Psoas muscle (tissue), 8 donors: ENCODE measurements at regions of chr7 and their contacts with region 1.

Region 1: DNA sequence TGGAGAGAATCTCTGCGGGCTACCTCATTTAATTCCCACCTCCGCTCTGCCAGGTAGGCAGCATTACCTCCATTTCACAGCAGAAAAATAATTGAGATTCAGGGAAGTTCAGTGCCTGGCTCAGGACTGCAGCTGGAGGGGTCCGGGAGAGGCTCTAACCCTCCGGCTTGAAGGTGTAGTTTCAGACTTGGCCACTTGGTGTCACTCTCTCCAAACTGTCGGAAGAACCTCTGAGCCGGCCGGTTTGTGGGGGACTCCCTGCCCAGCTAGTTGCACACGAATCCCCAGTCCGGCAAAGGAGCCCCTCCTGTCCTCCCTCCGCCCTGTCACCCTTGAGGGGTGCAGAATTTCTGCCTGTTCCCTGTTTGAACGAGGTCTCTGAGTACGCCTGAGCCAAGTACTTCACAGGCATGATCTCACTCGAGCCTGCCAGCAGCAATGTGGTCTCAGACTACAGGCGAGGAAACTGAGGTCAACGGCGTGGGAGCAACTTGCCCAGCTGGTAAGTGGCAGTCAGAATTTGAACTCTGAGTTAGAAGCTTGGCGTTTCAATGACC is 144.7 kb upstream of the ZNF716 start:
- DNase-seq: no peak
- ATAC-seq: peak in 3 of 4 donors; percentile 57 to 66 (median 62)
- H3K4me3 ChIP-seq: no peak overlapping the region
- H3K27ac ChIP-seq: no peak overlapping the region
- H3K4me1 ChIP-seq: no peaks in the 10 kb centered on the region
- H3K27me3 ChIP-seq: no peaks in the 10 kb centered on the region
- CTCF ChIP-seq: peak; percentile 35

Region 2: GRCh38 chr7:57216340-57216739 is 88.9 kb before region 1 on chr7:
- intact Hi-C with region 1: no loop called
- DNase-seq: no peak
- ATAC-seq: no peak
- H3K4me3 ChIP-seq: no peak overlapping the region
- H3K27ac ChIP-seq: no peak overlapping the region
- H3K4me1 ChIP-seq: no peaks in the 10 kb centered on the region
- H3K27me3 ChIP-seq: no peaks in the 10 kb centered on the region
- CTCF ChIP-seq: no peak

Region 3: GRCh38 chr7:57364933-57365710 is 59.9 kb after region 1 on chr7:
- intact Hi-C with region 1: loop called in 1 of 2 experiments (anchors 10 kb)
- DNase-seq: no peak
- ATAC-seq: no peak
- H3K4me3 ChIP-seq: no peak overlapping the region
- H3K27ac ChIP-seq: no peak overlapping the region
- H3K4me1 ChIP-seq: no peaks in the 10 kb centered on the region
- H3K27me3 ChIP-seq: no peaks in the 10 kb centered on the region
- CTCF ChIP-seq: no peak

Region 4: GRCh38 chr7:57487957-57488546 is 182.8 kb after region 1 on chr7:
- intact Hi-C with region 1: loop called (anchors 5 to 10 kb)
- DNase-seq: no peak
- ATAC-seq: no peak
- H3K4me3 ChIP-seq: no peak overlapping the region
- H3K27ac ChIP-seq: no peak overlapping the region
- H3K4me1 ChIP-seq: no peaks in the 10 kb centered on the region
- H3K27me3 ChIP-seq: no peaks in the 10 kb centered on the region
- CTCF ChIP-seq: no peak